ENCODE measurements at regions of chr7 and their contacts with region 1.

Region 1: GRCh38 chr7:139431010-139431409 is 52.5 kb downstream of the KLRG2 start:
- DNase-seq: no peak
- H3K4me3 ChIP-seq: no peak overlapping the region
- H3K27ac ChIP-seq: peak overlapping the region in 58 of 59 donors; percentile 31 to 93 (median 82)
- H3K27me3 ChIP-seq: no peaks in the 10 kb centered on the region
- CTCF ChIP-seq: no peak

Region 2: DNA sequence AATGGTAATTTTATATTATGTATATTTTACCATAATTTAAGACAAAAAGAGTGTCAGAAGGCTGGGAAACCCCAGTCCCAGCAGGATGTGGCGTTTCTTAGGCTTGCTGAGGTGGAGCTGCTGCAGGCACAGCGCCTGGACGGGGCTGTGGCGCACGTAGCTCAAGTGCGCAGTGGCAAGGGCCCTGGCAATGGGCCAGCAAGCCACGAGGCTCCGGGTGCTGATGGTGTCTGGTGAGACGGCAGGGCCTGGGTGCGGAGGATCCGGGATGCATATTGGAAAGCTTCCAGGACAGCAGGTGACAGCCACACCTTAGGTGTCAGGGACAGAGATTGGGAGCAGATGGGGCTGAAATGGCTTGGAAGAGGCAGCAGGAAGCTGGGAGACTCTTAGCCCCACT is 129.7 kb after region 1 on chr7:
- intact Hi-C with region 1: loop called in 1 of 2 experiments (anchors 10 kb)
- DNase-seq: no peak
- H3K4me3 ChIP-seq: no peak overlapping the region
- H3K27ac ChIP-seq: no peak overlapping the region
- H3K27me3 ChIP-seq: no peaks in the 10 kb centered on the region
- CTCF ChIP-seq: no peak